Activated T-helper 2 cell treated with anti-CD3 and anti-CD28 coated beads, Interferon-gamma antibody, Interleukin-2, Interleukin-4, amounts not matched to agents 10 μg/mL and 5 μg/mL and 100 μg/mL, durations not matched to agents 14 hours and 24 hours and 36 hours (primary cell): ENCODE measurements at regions of chr4 and their contacts with region 1.

Region 1: GRCh38 chr4:77075869-77076799 is at the start of gene CCNI:
- DNase-seq: peak; percentile 92
- H3K4me3 Mint-ChIP-seq: peak within 1 kb of the TSS; percentile 94
- H3K27ac Mint-ChIP-seq: peak within 1 kb of the TSS; percentile 100
- H3K4me1 Mint-ChIP-seq: peaks cover 38% of the 10 kb centered on the region
- H3K27me3 Mint-ChIP-seq: no peaks in the 10 kb centered on the region
- total RNA-seq, gene CCNI: 321 and 330 TPM in 2 replicates

Region 2: GRCh38 chr4:76148142-76148865 is 927.8 kb before region 1 on chr4 and contains the start of gene NUP54:
- intact Hi-C with region 1: loop called (anchors 10 kb)
- DNase-seq: peak; percentile 94
- H3K4me3 Mint-ChIP-seq: peak within 1 kb of the TSS; percentile 89
- H3K27ac Mint-ChIP-seq: peak within 1 kb of the TSS; percentile 94
- H3K4me1 Mint-ChIP-seq: peaks cover 23% of the 10 kb centered on the region
- H3K27me3 Mint-ChIP-seq: no peaks in the 10 kb centered on the region
- total RNA-seq, gene NUP54: 74.7 and 75.6 TPM in 2 replicates

Region 3: GRCh38 chr4:76342191-76342590 is 733.9 kb before region 1 on chr4:
- intact Hi-C with region 1: no loop called
- DNase-seq: no peak
- H3K4me3 Mint-ChIP-seq: no peak overlapping the region
- H3K27ac Mint-ChIP-seq: no peak overlapping the region
- H3K4me1 Mint-ChIP-seq: peaks cover 1% of the 10 kb centered on the region
- H3K27me3 Mint-ChIP-seq: peaks cover 10% of the 10 kb centered on the region

Region 4: DNA sequence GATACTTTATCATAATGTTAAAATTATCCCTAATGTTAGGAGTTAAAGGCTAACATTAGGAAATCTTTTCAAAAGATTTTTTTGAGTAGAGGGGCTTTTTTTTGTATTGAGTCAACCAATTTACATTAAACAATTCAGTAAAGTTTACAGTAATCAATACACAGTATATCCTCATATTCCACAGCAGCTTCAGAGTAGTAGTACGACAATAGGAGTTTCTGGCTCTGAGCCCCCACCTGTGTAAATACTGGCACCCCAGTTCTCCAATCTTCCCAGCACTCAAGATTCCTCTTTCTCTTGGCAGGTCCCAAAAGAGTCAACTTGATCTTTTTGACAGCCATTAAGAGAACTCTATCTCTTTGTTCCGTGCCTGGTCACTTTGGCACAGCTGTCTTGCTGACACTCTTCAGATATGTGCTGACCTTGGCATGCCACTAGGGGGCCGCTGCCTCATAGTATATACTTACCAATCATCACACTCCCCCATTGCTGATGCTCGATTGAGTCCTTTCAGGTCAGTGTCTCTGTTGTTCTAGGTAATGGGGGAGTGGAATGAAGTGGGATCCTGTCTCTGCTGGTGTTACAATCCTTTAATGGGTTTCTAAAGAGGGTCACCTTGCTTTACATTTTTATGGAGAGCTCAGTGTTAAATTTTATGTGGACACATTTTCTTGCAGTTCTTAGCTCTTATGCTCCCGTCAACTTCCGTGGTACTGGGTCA is 19.1 kb after region 1 on chr4:
- intact Hi-C with region 1: loop called (anchors 1 kb)
- DNase-seq: peak; percentile 55
- H3K4me3 Mint-ChIP-seq: no peak overlapping the region
- H3K27ac Mint-ChIP-seq: no peak overlapping the region
- H3K4me1 Mint-ChIP-seq: peaks cover 25% of the 10 kb centered on the region
- H3K27me3 Mint-ChIP-seq: peaks cover 6% of the 10 kb centered on the region

Region 5: GRCh38 chr4:77120886-77121508 is 44.9 kb after region 1 on chr4:
- intact Hi-C with region 1: no loop called
- DNase-seq: no peak
- H3K4me3 Mint-ChIP-seq: no peak overlapping the region
- H3K27ac Mint-ChIP-seq: no peak overlapping the region
- H3K4me1 Mint-ChIP-seq: no peaks in the 10 kb centered on the region
- H3K27me3 Mint-ChIP-seq: peaks cover 23% of the 10 kb centered on the region

Region 6: GRCh38 chr4:77193511-77194102 is 117.5 kb after region 1 on chr4:
- intact Hi-C with region 1: loop called (anchors 1 kb)
- DNase-seq: peak; percentile 77
- H3K4me3 Mint-ChIP-seq: peak overlapping the region; percentile 81
- H3K27ac Mint-ChIP-seq: peak overlapping the region; percentile 97
- H3K4me1 Mint-ChIP-seq: peaks cover 47% of the 10 kb centered on the region
- H3K27me3 Mint-ChIP-seq: peaks cover 3% of the 10 kb centered on the region

Region 7: DNA sequence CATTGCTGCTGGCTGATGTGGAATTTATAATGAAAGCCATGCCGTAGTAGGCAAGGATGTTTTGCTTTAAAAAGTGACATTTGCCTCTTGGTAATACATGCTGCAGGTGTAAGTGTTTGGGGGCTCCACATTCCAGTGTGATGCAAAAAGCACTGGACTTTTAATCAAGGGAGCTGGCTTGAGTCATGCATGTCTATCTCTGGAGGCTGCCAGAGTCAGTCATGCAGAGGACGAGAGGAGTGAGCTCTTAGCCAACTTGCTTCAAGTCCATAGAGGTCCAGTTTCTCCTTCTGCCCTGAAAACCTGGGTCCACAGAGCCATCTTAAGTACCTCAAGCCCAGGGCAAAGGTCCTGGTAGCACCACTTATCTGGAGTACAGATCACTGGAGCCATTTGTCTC is 517.9 kb after region 1 on chr4:
- intact Hi-C with region 1: loop called (anchors 1 kb)
- DNase-seq: no peak
- H3K4me3 Mint-ChIP-seq: no peak overlapping the region
- H3K27ac Mint-ChIP-seq: peak overlapping the region; percentile 66
- H3K4me1 Mint-ChIP-seq: peaks cover 55% of the 10 kb centered on the region
- H3K27me3 Mint-ChIP-seq: no peaks in the 10 kb centered on the region